ENCODE measurements at regions of chr12 and their contacts with region 1.

Region 1: DNA sequence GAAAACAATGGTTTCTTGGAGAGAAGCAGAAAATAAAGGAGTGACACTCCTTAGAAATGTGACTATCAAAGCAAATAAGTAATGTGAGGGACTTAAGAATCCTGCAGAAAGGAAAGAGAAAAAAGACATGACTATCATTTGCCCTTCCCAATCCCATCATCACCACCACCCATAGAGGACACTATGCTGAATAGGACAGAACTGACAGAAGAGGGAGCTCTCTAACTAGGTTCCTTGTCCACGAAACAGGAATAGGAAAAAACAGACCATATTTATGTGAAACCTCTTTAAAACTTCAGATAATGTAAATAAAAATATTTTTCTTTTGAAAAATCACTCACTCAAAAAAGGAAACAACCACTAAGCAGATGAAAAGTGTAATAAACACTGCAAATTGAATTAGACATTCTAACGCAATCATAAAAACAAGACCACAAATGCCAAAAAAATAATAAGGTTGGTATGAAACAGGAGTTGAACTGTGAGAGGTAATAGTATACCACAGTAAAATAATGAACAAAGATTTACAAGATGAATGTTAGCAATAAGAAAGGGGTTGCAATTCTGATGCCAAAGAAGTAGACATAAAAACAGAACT is 24.1 kb downstream of the KLRD1 start:
- DNase-seq: no peak
- H3K4me3 Mint-ChIP-seq: no peak overlapping the region
- H3K27ac Mint-ChIP-seq: no peak overlapping the region
- H3K4me1 Mint-ChIP-seq: peaks cover 2% of the 10 kb centered on the region
- H3K27me3 Mint-ChIP-seq: peaks cover 9% of the 10 kb centered on the region

Region 2: GRCh38 chr12:10235761-10236631 is 95.7 kb before region 1 on chr12:
- CTCF ChIA-PET with region 1: interaction called, 8 read pairs
- POLR2A ChIA-PET with region 1: no interaction called
- intact Hi-C with region 1: loop called (anchors 2 kb)
- DNase-seq: peak; percentile 47
- H3K4me3 Mint-ChIP-seq: no peak overlapping the region
- H3K27ac Mint-ChIP-seq: no peak overlapping the region
- H3K4me1 Mint-ChIP-seq: no peaks in the 10 kb centered on the region
- H3K27me3 Mint-ChIP-seq: peaks cover 3% of the 10 kb centered on the region

Region 3: GRCh38 chr12:10364815-10365622 is 33.3 kb after region 1 on chr12:
- CTCF ChIA-PET with region 1: no interaction called
- POLR2A ChIA-PET with region 1: no interaction called
- intact Hi-C with region 1: loop called (anchors 2 kb)
- DNase-seq: peak; percentile 64
- H3K4me3 Mint-ChIP-seq: no peak overlapping the region
- H3K27ac Mint-ChIP-seq: no peak overlapping the region
- H3K4me1 Mint-ChIP-seq: no peaks in the 10 kb centered on the region
- H3K27me3 Mint-ChIP-seq: peaks cover 2% of the 10 kb centered on the region

Region 4: GRCh38 chr12:10562306-10562933 is 230.7 kb after region 1 on chr12:
- CTCF ChIA-PET with region 1: interaction called, 7 read pairs
- POLR2A ChIA-PET with region 1: no interaction called
- intact Hi-C with region 1: loop called (anchors 1 kb)
- DNase-seq: no peak
- H3K4me3 Mint-ChIP-seq: no peak overlapping the region
- H3K27ac Mint-ChIP-seq: no peak overlapping the region
- H3K4me1 Mint-ChIP-seq: no peaks in the 10 kb centered on the region
- H3K27me3 Mint-ChIP-seq: peaks cover 26% of the 10 kb centered on the region

Measured in activated CD4-positive, alpha-beta memory T cell treated with anti-CD3 and anti-CD28 coated beads for 36 hours (primary cell).